ENCODE measurements at regions of chr22 and their contacts with region 1.

Region 1: GRCh38 chr22:21938071-21938822 is 14.4 kb downstream of the PPM1F start:
- DNase-seq: peak; percentile 97
- ATAC-seq: peak; percentile 94
- H3K4me3 Mint-ChIP-seq: peak overlapping the region; percentile 85
- H3K27ac Mint-ChIP-seq: peak overlapping the region; percentile 84
- H3K4me1 Mint-ChIP-seq: peaks cover 8% of the 10 kb centered on the region
- H3K27me3 Mint-ChIP-seq: no peaks in the 10 kb centered on the region
- CTCF ChIP-seq: peak; percentile 100

Region 2: GRCh38 chr22:21771631-21771976 is 166.6 kb before region 1 on chr22:
- CTCF ChIA-PET with region 1: interaction called, 14 read pairs
- POLR2A ChIA-PET with region 1: no interaction called
- DNase-seq: no peak
- ATAC-seq: no peak
- H3K4me3 Mint-ChIP-seq: no peak overlapping the region
- H3K27ac Mint-ChIP-seq: no peak overlapping the region
- H3K4me1 Mint-ChIP-seq: no peaks in the 10 kb centered on the region
- H3K27me3 Mint-ChIP-seq: no peaks in the 10 kb centered on the region
- CTCF ChIP-seq: no peak

Region 3: GRCh38 chr22:21898354-21898896 is 39.8 kb before region 1 on chr22:
- CTCF ChIA-PET with region 1: interaction called, 10 read pairs
- POLR2A ChIA-PET with region 1: no interaction called
- DNase-seq: no peak
- ATAC-seq: no peak
- H3K4me3 Mint-ChIP-seq: no peak overlapping the region
- H3K27ac Mint-ChIP-seq: no peak overlapping the region
- H3K4me1 Mint-ChIP-seq: no peaks in the 10 kb centered on the region
- H3K27me3 Mint-ChIP-seq: peaks cover 5% of the 10 kb centered on the region
- CTCF ChIP-seq: no peak

Region 4: DNA sequence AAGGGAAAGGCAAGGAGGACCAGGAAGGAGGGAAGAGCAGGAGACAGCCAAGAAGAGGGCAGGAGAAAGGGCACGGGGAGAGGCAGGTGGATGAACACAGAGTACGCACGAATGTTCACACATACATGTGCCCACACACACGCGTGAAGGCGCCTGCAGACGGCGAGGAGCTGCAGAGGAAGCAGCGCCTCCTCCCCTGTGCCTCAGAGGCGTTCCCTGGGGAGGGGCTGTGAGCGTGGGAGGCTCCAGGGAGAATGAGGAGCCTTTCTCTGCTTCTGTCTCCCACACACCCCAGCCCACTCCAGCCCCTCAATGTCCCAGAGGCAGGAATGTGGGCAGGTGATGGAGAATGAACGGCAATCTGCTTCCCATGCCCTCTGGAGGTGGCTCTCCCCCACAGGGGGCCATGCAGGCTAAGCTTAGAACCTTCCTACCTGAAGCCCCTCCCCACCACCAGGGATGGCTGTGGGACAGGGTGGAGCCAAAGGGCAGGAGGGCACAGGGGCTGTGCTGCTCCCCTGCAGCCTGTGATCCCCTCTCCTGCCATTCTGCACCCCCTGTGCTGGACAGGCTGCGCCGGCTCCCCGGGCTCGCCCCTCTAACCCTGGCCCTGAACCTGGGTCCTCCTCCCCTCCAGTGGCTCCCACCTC is 10.9 kb before region 1 on chr22:
- CTCF ChIA-PET with region 1: interaction called, 49 read pairs
- POLR2A ChIA-PET with region 1: interaction called, 3 read pairs
- DNase-seq: no peak
- ATAC-seq: peak; percentile 66
- H3K4me3 Mint-ChIP-seq: no peak overlapping the region
- H3K27ac Mint-ChIP-seq: peak overlapping the region; percentile 57; the same call in 1 of the 2 replicates
- H3K4me1 Mint-ChIP-seq: peaks cover 43% of the 10 kb centered on the region
- H3K27me3 Mint-ChIP-seq: no peaks in the 10 kb centered on the region
- CTCF ChIP-seq: no peak